Activated B cell treated with CpG ODN at 0.5 μM for 24 hours (primary cell): ENCODE measurements at regions of chr9 and their contacts with region 1.

Region 1: GRCh38 chr9:93319992-93320500 is 131.4 kb upstream of the FAM120A start:
- DNase-seq: no peak
- ATAC-seq: no peak
- H3K4me3 Mint-ChIP-seq: no peak overlapping the region
- H3K27ac Mint-ChIP-seq: no peak overlapping the region
- H3K4me1 Mint-ChIP-seq: no peaks in the 10 kb centered on the region
- H3K27me3 Mint-ChIP-seq: peaks cover 29% of the 10 kb centered on the region
- CTCF ChIP-seq: no peak

Region 2: GRCh38 chr9:93288891-93289883 is 30.9 kb before region 1 on chr9:
- CTCF ChIA-PET with region 1: no interaction called
- POLR2A ChIA-PET with region 1: no interaction called
- intact Hi-C with region 1: no loop called
- DNase-seq: no peak
- ATAC-seq: no peak
- H3K4me3 Mint-ChIP-seq: no peak overlapping the region
- H3K27ac Mint-ChIP-seq: no peak overlapping the region
- H3K4me1 Mint-ChIP-seq: peaks cover 15% of the 10 kb centered on the region
- H3K27me3 Mint-ChIP-seq: peaks cover 18% of the 10 kb centered on the region
- CTCF ChIP-seq: no peak

Region 3: GRCh38 chr9:93379051-93379450 is 59.0 kb after region 1 on chr9:
- CTCF ChIA-PET with region 1: no interaction called
- POLR2A ChIA-PET with region 1: no interaction called
- intact Hi-C with region 1: loop called (anchors 10 kb)
- DNase-seq: no peak
- ATAC-seq: no peak
- H3K4me3 Mint-ChIP-seq: no peak overlapping the region
- H3K27ac Mint-ChIP-seq: no peak overlapping the region
- H3K4me1 Mint-ChIP-seq: peaks cover 2% of the 10 kb centered on the region
- H3K27me3 Mint-ChIP-seq: peaks cover 12% of the 10 kb centered on the region
- CTCF ChIP-seq: no peak